Activated B cell treated with CpG ODN at 0.5 μM for 24 hours (primary cell): ENCODE measurements at regions of chr10 and their contacts with region 1.

Region 1: DNA sequence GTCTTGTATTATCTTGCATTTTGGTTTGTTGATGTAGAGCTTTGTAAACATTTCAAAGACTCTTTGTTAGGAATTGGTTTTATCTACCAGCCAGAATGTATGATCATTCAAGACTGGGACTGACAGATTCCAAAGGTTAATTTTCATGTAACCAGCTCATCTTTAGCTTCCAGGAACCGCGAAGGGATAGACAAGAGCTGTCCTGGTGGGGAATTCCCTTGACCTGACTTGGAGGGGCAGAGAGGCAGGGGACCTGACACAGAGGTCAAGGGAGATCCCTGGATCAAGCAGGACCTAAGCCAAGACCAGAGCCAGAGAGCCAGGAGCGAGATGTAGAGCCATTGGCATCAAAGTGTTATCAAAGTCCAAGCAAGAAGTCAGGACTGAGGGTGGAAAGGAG is 6.6 kb upstream of the LOXL4 start:
- DNase-seq: no peak
- ATAC-seq: no peak
- H3K4me3 Mint-ChIP-seq: no peak overlapping the region
- H3K27ac Mint-ChIP-seq: no peak overlapping the region
- H3K4me1 Mint-ChIP-seq: no peaks in the 10 kb centered on the region
- H3K27me3 Mint-ChIP-seq: peaks cover 23% of the 10 kb centered on the region
- CTCF ChIP-seq: no peak

Region 2: GRCh38 chr10:98285416-98285815 is 10.9 kb after region 1 on chr10:
- CTCF ChIA-PET with region 1: no interaction called
- POLR2A ChIA-PET with region 1: interaction called, 13 read pairs
- intact Hi-C with region 1: no loop called
- DNase-seq: no peak
- ATAC-seq: no peak
- H3K4me3 Mint-ChIP-seq: no peak overlapping the region
- H3K27ac Mint-ChIP-seq: no peak overlapping the region
- H3K4me1 Mint-ChIP-seq: no peaks in the 10 kb centered on the region
- H3K27me3 Mint-ChIP-seq: peaks cover 18% of the 10 kb centered on the region
- CTCF ChIP-seq: no peak